ENCODE measurements at regions of chr12 and their contacts with region 1.

Region 1: DNA sequence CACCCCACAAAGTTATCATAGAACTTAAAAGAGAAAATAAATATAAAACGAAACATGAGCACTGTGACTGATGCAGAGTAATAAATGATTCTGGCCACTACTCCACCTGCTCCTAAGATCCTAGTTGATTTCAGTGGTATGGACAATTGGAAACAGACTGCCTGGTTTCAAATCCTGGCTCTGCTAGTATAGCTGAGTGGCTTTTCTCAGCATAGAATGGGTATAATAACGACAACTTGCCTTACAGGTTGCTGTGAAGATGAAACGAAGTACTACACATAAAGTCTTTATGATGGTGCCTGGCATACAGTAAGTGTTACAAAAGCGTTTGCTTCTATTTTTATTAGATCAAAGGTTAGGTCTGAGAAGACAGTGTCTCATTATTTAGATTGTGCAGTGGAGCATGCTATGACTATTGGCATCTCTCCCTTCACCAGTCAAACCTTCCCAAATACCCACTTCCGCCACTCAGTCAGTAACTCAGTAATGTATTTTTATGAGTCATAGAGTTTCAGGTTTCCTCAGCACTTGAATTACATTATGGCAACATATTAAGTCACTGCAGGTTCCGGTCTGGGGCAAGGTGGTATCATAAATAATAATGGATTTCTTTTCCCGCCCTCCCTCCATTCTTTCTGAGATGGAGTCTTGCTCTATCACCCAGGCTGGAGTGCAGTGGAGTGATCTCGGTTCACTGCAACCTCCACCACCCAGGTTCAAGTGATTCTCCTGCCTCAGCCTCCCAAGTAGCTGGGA is 29.7 kb upstream of the NR2C1 start:
- DNase-seq: peak; percentile 68
- ATAC-seq: peak; percentile 99
- H3K4me3 Mint-ChIP-seq: no peak overlapping the region
- H3K27ac Mint-ChIP-seq: peak overlapping the region; percentile 38
- H3K4me1 Mint-ChIP-seq: peaks cover 14% of the 10 kb centered on the region
- H3K27me3 Mint-ChIP-seq: no peaks in the 10 kb centered on the region

Region 2: GRCh38 chr12:94622475-94622874 is 480.6 kb before region 1 on chr12:
- CTCF ChIA-PET with region 1: no interaction called
- POLR2A ChIA-PET with region 1: no interaction called
- intact Hi-C with region 1: no loop called
- DNase-seq: no peak
- ATAC-seq: no peak
- H3K4me3 Mint-ChIP-seq: no peak overlapping the region
- H3K27ac Mint-ChIP-seq: peak overlapping the region; percentile 67
- H3K4me1 Mint-ChIP-seq: peaks cover 22% of the 10 kb centered on the region
- H3K27me3 Mint-ChIP-seq: no peaks in the 10 kb centered on the region

Region 3: GRCh38 chr12:95072900-95073697 is 30.0 kb before region 1 on chr12 and contains the start of gene NR2C1:
- CTCF ChIA-PET with region 1: interaction called, 5 read pairs
- POLR2A ChIA-PET with region 1: no interaction called
- intact Hi-C with region 1: loop called (anchors 1 kb)
- DNase-seq: peak; percentile 95
- ATAC-seq: peak; percentile 99
- H3K4me3 Mint-ChIP-seq: peak within 1 kb of the TSS; percentile 84
- H3K27ac Mint-ChIP-seq: peak within 1 kb of the TSS; percentile 82
- H3K4me1 Mint-ChIP-seq: peaks cover 12% of the 10 kb centered on the region
- H3K27me3 Mint-ChIP-seq: no peaks in the 10 kb centered on the region
- total RNA-seq, gene NR2C1: 27.6 to 39.3 TPM

Region 4: GRCh38 chr12:95428472-95428871 is 325.4 kb after region 1 on chr12:
- CTCF ChIA-PET with region 1: no interaction called
- POLR2A ChIA-PET with region 1: no interaction called
- intact Hi-C with region 1: no loop called
- DNase-seq: peak; percentile 33
- ATAC-seq: peak; percentile 97
- H3K4me3 Mint-ChIP-seq: peak overlapping the region; percentile 8
- H3K27ac Mint-ChIP-seq: peak overlapping the region; percentile 74
- H3K4me1 Mint-ChIP-seq: peaks cover 12% of the 10 kb centered on the region
- H3K27me3 Mint-ChIP-seq: peaks cover 1% of the 10 kb centered on the region